ENCODE measurements at regions of chr4 and their contacts with region 1.

Region 1: DNA sequence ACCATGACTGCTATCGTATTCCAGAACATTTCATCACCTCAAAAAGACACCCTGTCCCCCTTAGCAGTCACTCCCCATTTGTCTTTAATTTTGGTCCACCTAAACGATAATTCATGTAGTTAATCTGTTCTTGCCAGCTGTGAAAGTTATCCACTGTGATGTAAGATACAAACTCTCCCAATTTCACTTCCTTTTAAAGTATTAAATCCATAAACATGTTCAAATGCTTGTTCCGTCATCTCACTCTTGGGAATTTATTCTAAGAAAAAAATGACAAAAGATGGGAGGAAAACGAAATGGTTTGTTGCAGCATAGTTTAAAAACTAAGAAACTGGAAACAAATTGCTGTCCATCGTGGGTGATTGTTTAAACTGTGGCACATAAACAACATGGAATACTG is 53.7 kb upstream of the IRF2 start:
- DNase-seq: no peak
- ATAC-seq: no peak
- H3K4me3 Mint-ChIP-seq: no peak overlapping the region
- H3K27ac Mint-ChIP-seq: peak overlapping the region; percentile 35
- H3K4me1 Mint-ChIP-seq: peaks cover 73% of the 10 kb centered on the region
- H3K27me3 Mint-ChIP-seq: no peaks in the 10 kb centered on the region
- CTCF ChIP-seq: no peak

Region 2: GRCh38 chr4:184514121-184514988 is 13.7 kb before region 1 on chr4:
- CTCF ChIA-PET with region 1: interaction called, 4 read pairs
- POLR2A ChIA-PET with region 1: interaction called, 15 read pairs
- intact Hi-C with region 1: no loop called
- DNase-seq: no peak
- ATAC-seq: peak; percentile 90
- H3K4me3 Mint-ChIP-seq: peak overlapping the region; percentile 32
- H3K27ac Mint-ChIP-seq: peak overlapping the region; percentile 54
- H3K4me1 Mint-ChIP-seq: peaks cover 31% of the 10 kb centered on the region
- H3K27me3 Mint-ChIP-seq: no peaks in the 10 kb centered on the region
- CTCF ChIP-seq: no peak